CD4-positive, alpha-beta T cell (primary cell): ENCODE measurements at regions of chrX and their contacts with region 1.

Region 1: DNA sequence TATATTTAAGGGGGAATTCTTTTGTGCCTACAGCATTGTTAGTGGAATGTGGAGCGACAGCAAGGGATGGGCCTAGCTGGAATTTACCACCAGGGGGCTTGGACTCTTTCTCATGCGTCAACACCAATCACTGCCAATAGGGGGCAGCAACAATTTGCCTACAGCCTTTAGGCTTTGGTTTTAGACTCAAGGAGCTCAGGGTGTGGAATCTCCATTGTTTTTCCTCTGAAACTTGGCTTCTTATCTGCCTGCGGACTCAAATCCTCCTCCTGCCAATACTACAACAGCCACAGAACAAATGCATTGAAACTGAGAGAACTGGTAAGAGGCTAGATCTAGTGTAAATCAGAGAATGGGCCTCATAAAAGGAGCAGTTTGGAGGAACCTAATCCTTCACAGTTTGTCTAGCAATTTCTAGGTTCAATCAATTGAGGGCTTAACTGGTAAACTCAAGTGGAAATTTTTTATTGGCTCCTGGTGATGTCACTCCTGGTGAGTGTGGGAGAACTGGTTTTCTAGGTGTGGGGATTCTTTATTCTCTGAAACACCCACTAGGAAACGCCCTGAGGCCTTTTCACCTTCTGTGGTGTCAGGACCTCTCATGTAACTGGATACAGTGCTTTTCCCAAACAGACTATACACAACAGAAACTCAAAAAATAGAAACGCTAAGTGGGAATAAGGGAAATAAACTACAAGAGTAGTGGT is 27.9 kb upstream of the TMSB4X start:
- DNase-seq: peak; percentile 60 to 87 (median 69)
- ATAC-seq: peak; percentile 21
- H3K4me3 ChIP-seq: no peak overlapping the region
- H3K4me3 Mint-ChIP-seq: peak overlapping the region; percentile 75
- H3K27ac ChIP-seq: peak overlapping the region; percentile 29 to 59
- H3K27ac Mint-ChIP-seq: peak overlapping the region; percentile 95
- H3K4me1 ChIP-seq: peaks cover 49% of the 10 kb centered on the region
- H3K4me1 Mint-ChIP-seq: peaks cover 58% of the 10 kb centered on the region
- H3K27me3 ChIP-seq: no peaks in the 10 kb centered on the region
- H3K27me3 Mint-ChIP-seq: no peaks in the 10 kb centered on the region
- CTCF ChIP-seq: peak; percentile 84

Region 2: DNA sequence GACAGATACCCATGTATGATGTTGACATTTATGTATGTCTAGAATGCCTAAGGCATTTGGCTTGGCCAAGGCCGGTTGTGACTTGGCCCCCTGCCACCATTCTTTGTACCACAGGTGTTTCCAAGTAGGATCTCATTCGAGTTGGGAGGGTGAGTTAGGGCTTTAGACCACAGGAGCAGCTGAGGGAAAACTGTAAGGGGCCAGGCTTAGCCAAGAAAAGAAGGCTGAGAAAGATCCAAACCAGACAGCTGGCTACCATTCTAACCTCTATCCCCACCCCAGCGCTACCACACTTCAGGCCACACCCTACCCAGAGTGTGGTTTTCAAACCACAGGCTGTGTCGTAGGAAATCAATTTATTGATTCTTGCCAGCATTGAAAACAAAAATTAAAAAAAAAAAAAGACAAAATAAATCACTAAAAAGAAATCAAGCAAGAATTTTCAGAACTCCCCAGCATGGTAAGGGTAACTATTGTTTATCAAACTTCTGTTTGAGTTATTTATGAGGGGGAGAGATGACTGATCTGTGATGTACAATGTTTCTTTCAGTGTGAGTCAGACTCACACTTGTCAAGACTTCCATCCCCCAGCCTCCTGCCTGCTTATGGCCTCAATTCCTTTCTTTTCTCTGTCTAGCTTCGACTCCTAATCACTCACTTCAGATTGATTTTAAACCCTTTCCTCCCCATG is 37.8 kb after region 1 on chrX:
- CTCF ChIA-PET with region 1: interaction called, 181 read pairs
- POLR2A ChIA-PET with region 1: interaction called, 1,050 read pairs
- intact Hi-C with region 1: no loop called
- DNase-seq: peak in 10 of 14 experiments; percentile 35 to 80 (median 52)
- ATAC-seq: peak; percentile 77
- H3K4me3 ChIP-seq: peak overlapping the region; percentile 12
- H3K4me3 Mint-ChIP-seq: peak overlapping the region; percentile 82
- H3K27ac ChIP-seq: peak overlapping the region; percentile 66 to 69
- H3K27ac Mint-ChIP-seq: peak overlapping the region; percentile 95
- H3K4me1 ChIP-seq: peaks cover 80% of the 10 kb centered on the region
- H3K4me1 Mint-ChIP-seq: peaks cover 76% of the 10 kb centered on the region
- H3K27me3 ChIP-seq: no peaks in the 10 kb centered on the region
- H3K27me3 Mint-ChIP-seq: no peaks in the 10 kb centered on the region
- CTCF ChIP-seq: no peak

Region 3: DNA sequence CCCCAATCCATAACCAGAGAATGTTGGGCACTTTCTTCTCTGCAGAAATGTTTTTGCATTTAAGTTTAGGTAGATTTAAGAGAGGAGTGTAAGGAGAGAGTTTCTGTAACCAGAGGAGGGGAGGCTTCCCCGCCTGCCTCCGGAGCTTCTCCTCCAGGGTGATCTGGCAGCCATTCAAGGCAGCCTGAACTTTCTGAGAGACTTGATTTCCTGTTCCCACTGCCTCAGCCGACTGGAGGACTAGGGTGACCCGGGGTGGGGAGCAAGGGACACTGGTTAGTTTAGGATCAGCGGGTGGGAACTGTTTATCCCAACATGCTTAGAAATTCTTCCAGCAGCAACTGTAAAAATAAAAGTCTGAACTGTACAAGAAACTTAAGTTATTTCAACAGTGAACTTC is 82.3 kb after region 1 on chrX:
- CTCF ChIA-PET with region 1: interaction called, 11 read pairs
- POLR2A ChIA-PET with region 1: interaction called, 29 read pairs
- intact Hi-C with region 1: no loop called
- DNase-seq: peak in 7 of 14 experiments; percentile 9 to 56 (median 40)
- ATAC-seq: peak; percentile 42
- H3K4me3 ChIP-seq: no peak overlapping the region
- H3K4me3 Mint-ChIP-seq: peak overlapping the region; percentile 70
- H3K27ac ChIP-seq: peak overlapping the region; percentile 19 to 52
- H3K27ac Mint-ChIP-seq: peak overlapping the region; percentile 98
- H3K4me1 ChIP-seq: peaks cover 53% of the 10 kb centered on the region
- H3K4me1 Mint-ChIP-seq: peaks cover 83% of the 10 kb centered on the region
- H3K27me3 ChIP-seq: no peaks in the 10 kb centered on the region
- H3K27me3 Mint-ChIP-seq: no peaks in the 10 kb centered on the region
- CTCF ChIP-seq: no peak

Region 4: GRCh38 chrX:13087322-13088155 is 140.5 kb after region 1 on chrX:
- CTCF ChIA-PET with region 1: interaction called, 72 read pairs
- POLR2A ChIA-PET with region 1: interaction called, 55 read pairs
- intact Hi-C with region 1: loop called (anchors 1 to 2 kb)
- DNase-seq: peak in 11 of 14 experiments; percentile 34 to 94 (median 61)
- ATAC-seq: peak; percentile 63
- H3K4me3 ChIP-seq: peak overlapping the region; percentile 22
- H3K4me3 Mint-ChIP-seq: peak overlapping the region; percentile 85
- H3K27ac ChIP-seq: peak overlapping the region; percentile 91 to 94
- H3K27ac Mint-ChIP-seq: peak overlapping the region; percentile 95
- H3K4me1 ChIP-seq: peaks cover 72% of the 10 kb centered on the region
- H3K4me1 Mint-ChIP-seq: peaks cover 90% of the 10 kb centered on the region
- H3K27me3 ChIP-seq: no peaks in the 10 kb centered on the region
- H3K27me3 Mint-ChIP-seq: no peaks in the 10 kb centered on the region
- CTCF ChIP-seq: no peak

Region 5: DNA sequence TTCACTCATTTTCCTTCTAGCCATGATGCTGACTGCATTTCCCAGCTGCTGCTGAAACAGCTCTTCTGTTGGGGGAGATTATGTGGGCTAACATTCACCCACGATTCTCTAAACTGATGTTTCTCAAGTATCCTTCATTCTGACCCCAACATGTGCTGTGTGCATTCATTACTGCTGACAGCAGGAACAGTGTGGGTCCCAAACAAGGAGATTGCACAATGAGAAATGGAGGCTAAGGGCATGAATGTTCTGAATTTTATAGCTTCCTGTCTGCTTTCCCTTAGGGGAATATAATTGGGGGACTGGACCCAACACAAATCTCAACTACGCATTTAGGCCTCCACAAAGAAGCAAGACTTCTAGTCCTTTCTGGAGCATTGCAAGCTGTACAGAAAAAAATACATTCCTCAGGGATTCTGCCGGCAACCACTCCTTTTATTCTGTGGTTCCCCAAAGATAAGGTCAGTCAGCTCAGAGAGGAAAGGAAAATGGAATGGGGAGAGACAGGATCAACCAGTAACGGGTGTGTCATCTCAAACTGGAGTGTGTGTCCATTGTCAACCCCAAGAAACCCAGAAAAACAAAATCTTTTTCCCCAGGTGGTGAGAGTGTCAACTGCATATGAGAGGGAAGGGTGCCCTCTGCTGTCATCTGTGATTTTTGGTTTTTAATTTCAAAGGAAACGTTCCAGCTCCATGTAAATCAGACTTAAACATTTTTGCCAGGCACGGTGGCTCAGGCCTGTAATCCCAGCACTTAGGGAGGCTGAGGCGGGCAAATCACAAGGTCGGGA is 540.9 kb after region 1 on chrX:
- CTCF ChIA-PET with region 1: interaction called, 68 read pairs
- POLR2A ChIA-PET with region 1: interaction called, 17 read pairs
- intact Hi-C with region 1: loop called (anchors 1 kb)
- DNase-seq: peak; percentile 2 to 76 (median 22)
- ATAC-seq: peak; percentile 87
- H3K4me3 ChIP-seq: no peak overlapping the region
- H3K4me3 Mint-ChIP-seq: no peak overlapping the region
- H3K27ac ChIP-seq: no peak overlapping the region
- H3K27ac Mint-ChIP-seq: peak overlapping the region; percentile 77
- H3K4me1 ChIP-seq: peaks cover 11% of the 10 kb centered on the region
- H3K4me1 Mint-ChIP-seq: peaks cover 29% of the 10 kb centered on the region
- H3K27me3 ChIP-seq: no peaks in the 10 kb centered on the region
- H3K27me3 Mint-ChIP-seq: no peaks in the 10 kb centered on the region
- CTCF ChIP-seq: peak; percentile 55